ENCODE measurements at regions of chr10 and their contacts with region 1.

Region 1: GRCh38 chr10:61211468-61211867 is 241.7 kb downstream of the TMEM26 start:
- DNase-seq: no peak
- H3K4me3 ChIP-seq: no peak overlapping the region
- H3K4me3 Mint-ChIP-seq: no peak overlapping the region
- H3K27ac ChIP-seq: no peak overlapping the region
- H3K27ac Mint-ChIP-seq: no peak overlapping the region
- H3K4me1 ChIP-seq: no peaks in the 10 kb centered on the region
- H3K4me1 Mint-ChIP-seq: no peaks in the 10 kb centered on the region
- H3K27me3 ChIP-seq: no peaks in the 10 kb centered on the region
- H3K27me3 Mint-ChIP-seq: peaks cover 0 to 2% (median 0%) of the 10 kb centered on the region in 3 donors
- CTCF ChIP-seq: no peak

Region 2: GRCh38 chr10:62076891-62077290 is 865.4 kb after region 1 on chr10:
- intact Hi-C with region 1: loop called in 1 of 2 experiments (anchors 10 kb)
- DNase-seq: no peak
- H3K4me3 ChIP-seq: no peak overlapping the region
- H3K4me3 Mint-ChIP-seq: no peak overlapping the region
- H3K27ac ChIP-seq: no peak overlapping the region
- H3K27ac Mint-ChIP-seq: peak overlapping the region in 1 of 7 donors; percentile 48
- H3K4me1 ChIP-seq: peaks cover 8 to 12% of the 10 kb centered on the region in 2 donors
- H3K4me1 Mint-ChIP-seq: peaks cover 11% of the 10 kb centered on the region
- H3K27me3 ChIP-seq: no peaks in the 10 kb centered on the region
- H3K27me3 Mint-ChIP-seq: peaks cover 0 to 2% (median 0%) of the 10 kb centered on the region in 3 donors
- CTCF ChIP-seq: no peak

Measured in CD14-positive monocyte (primary cell).